Ascending aorta (tissue), 2 donors: ENCODE measurements at regions of chr17 and their contacts with region 1.

Region 1: DNA sequence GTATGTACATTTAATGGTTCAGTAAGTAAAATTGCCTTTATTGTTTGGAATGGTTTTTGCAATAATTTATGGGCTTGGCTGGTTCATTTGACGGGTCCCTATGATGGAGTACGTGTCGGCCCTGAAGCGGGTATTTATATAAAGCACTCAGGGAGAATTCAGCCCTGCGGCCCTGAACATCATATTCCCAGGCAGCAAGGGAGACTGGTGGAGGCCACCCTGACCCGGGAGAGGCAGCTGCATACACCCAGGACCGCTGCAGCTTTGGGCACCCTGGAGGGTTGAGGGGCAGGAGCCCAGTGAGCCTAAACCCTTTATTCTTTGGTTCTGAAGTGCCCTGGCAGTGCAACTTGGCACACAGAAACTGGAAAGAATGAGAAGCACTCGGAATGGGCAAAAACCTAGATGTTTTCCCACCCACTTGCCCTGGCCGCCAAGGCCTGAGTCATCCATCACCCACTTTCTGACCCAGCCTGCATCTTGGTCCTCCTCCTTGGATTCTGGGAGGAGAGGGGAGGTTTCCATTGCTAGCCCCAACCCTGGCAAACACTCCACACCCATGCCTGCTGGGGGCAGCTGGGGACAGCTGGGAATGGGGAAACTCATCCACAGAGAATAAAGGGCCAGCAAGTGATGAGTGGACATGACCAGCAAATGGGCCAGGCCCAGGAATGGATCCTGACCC is 162.2 kb upstream of the TNRC6C start:
- DNase-seq: peak; percentile 42 to 92
- H3K4me3 ChIP-seq: no peak overlapping the region
- H3K27ac ChIP-seq: peak overlapping the region; percentile 81 to 88
- H3K4me1 ChIP-seq: peaks cover 6 to 15% of the 10 kb centered on the region in 2 donors
- H3K27me3 ChIP-seq: no peaks in the 10 kb centered on the region
- CTCF ChIP-seq: no peak

Region 2: DNA sequence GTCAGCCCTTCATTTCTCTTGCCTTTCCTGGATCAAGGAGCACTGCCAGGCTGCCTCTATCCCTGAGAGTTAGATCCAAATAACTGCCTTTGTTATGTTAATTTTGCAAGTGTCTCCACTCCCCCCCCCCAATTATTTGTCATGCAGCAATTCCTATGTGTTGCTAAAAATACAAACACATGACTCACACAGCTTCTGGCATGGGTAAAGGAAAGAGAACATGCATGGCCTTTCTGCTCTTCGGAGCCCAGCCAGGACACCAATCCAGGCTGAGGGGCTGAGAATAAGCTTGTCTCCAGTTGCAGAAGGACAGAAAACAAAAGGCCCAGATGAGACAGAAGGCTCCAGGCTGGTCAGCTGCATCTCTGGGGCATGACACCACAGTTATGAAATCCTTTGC is 14.2 kb after region 1 on chr17:
- intact Hi-C with region 1: loop called (anchors 1 kb)
- DNase-seq: peak in 1 of 2 donors; percentile 88
- H3K4me3 ChIP-seq: no peak overlapping the region
- H3K27ac ChIP-seq: peak overlapping the region; percentile 52 to 73
- H3K4me1 ChIP-seq: peaks cover 17 to 20% of the 10 kb centered on the region in 2 donors
- H3K27me3 ChIP-seq: no peaks in the 10 kb centered on the region
- CTCF ChIP-seq: no peak

Region 3: DNA sequence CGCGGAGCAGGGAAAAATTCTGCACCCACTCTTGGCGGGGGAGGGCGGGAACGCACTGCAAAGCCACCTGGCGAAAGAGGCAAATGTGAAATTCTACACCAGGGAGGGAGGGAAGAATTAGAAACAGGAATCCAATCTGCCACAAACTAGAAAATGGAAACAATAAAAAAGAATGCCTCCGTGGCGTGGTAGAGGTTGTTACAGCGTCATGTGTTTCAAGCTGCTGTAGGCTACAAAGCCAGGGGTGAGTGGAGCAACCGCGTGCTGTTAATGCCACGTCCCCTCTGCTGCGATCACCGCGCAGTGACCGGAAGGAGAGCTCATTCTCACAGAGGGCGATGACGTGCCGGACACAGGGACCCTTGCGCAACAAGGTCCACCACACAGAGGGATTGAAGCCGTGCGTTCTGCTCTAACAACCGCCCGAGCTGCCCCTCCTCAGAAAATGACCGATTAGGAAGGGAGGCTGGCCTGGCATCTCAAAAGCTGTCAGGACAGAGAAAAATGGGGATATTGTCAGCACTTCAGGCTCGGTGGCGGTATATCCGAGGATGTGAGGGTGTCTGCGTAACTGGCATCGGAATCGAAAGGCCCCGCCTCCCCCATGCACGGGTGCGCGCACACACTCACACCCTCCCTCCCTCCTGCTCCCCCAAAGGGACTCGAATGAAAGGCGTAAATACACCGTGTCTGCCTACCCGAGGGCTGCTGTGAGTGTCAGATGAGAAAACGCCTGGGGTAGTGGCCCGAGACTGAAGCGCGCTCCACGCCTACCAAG is 91.3 kb after region 1 on chr17:
- intact Hi-C with region 1: loop called (anchors 5 kb)
- DNase-seq: peak; percentile 80 to 97
- H3K4me3 ChIP-seq: peak overlapping the region; percentile 54 to 68
- H3K27ac ChIP-seq: peak overlapping the region; percentile 80 to 84
- H3K4me1 ChIP-seq: peaks cover 0 to 12% of the 10 kb centered on the region in 2 donors
- H3K27me3 ChIP-seq: no peaks in the 10 kb centered on the region
- CTCF ChIP-seq: no peak